ENCODE measurements at regions of chr3 and their contacts with region 1.

Region 1: DNA sequence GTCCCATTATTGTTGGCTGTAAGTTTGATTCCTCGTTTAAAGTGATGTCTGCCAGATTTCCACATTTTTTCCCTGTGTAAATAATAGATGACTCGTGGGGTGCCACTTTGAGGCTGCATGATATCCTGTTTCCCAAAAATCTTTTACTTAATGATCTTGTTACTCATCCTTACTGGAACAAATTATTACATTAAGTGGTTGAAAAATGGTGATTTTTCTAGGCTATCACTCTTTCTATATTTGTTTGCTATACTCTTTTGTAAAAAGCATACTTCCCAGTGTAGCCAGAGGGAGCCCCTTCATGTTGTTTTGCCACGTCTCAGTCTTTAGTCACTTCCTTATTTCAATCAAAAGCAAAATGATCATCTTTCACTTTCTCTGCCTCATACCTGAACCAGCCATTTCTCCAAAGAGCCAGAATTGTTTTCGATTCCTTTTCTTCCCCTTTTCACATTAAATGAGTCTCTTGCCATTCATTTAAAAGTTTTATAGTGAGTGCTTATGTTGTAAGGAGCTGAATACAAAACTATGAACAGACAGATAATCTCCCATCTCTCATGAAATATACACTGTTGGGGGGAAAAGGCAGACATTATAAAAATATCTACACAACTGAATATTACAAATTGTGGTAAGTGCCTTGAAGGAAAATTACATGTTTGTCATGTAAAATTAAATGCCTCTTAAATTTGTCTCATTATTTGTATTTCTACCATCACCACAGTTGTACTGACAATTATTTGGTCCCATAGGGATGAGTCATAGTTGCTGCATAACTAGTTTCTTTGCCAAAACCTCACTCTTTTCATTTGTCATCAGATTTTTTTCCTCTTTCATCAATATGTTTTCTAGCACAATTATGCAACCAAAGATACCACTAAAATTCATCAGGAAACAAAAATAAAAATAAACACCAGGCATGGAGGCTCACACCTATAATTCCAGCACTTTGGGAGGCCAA is 41.5 kb downstream of the ADGRG7 start:
- DNase-seq: peak; percentile 57
- H3K4me3 Mint-ChIP-seq: peak overlapping the region; percentile 30
- H3K27ac Mint-ChIP-seq: peak overlapping the region; percentile 84
- H3K4me1 Mint-ChIP-seq: peaks cover 16% of the 10 kb centered on the region
- H3K27me3 Mint-ChIP-seq: no peaks in the 10 kb centered on the region

Region 2: DNA sequence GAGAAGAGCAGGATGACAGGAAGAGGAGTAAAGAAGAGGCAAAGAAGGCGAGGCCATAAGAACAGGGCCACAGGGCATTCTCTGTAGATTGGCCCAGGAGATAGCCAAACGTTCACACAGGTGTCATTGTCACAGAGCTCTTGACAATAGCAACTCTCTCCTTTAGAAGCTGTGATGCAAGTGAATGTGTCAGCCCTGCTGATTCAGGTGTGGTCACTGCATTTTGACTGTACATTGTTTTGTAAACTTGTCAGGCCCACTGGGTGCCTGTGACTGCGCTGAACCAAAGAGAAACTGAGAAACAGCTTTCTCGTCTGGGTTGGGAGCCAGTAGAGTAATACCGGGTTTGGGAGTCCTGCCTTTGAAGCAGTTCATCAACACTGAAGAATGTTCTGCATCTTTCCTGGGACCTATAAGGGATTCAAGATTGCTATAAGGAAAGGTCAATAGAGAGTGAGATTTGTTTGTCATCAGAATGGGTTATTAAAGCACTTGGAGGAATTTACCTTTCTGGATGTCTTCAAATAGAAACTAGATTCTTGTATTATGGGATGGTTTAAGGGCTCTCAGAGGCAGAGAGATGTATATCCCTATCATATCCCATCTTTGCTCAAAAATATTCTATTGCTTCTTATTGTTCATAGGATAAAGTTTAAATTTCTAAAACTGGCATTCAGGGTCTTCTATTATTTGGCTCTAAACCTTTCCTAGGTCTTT is 113.2 kb before region 1 on chr3:
- CTCF ChIA-PET with region 1: no interaction called
- intact Hi-C with region 1: no loop called
- DNase-seq: no peak
- H3K4me3 Mint-ChIP-seq: no peak overlapping the region
- H3K27ac Mint-ChIP-seq: no peak overlapping the region
- H3K4me1 Mint-ChIP-seq: no peaks in the 10 kb centered on the region
- H3K27me3 Mint-ChIP-seq: no peaks in the 10 kb centered on the region

Region 3: DNA sequence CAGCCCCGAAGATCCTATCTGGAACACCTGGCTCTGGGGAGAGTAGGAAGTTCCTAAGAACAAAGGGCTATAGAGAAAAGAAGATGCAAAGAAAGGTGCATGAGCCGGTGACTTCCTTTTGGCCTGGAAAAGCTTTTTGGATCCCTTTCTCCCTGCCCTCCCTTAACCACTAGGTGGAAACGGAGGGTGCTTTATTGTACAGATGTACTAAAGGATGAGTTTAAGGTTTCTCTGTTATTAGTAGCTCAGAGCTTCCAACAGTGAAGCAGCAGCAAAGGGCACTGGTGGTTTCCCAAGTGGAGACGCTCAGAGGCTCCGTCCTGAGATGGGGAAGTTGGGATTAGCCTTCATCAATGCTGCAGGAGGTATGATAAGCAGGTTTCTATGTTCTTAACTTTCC is 47.5 kb before region 1 on chr3:
- CTCF ChIA-PET with region 1: interaction called, 3 read pairs
- intact Hi-C with region 1: loop called (anchors 2 kb)
- DNase-seq: no peak
- H3K4me3 Mint-ChIP-seq: peak overlapping the region; percentile 37
- H3K27ac Mint-ChIP-seq: no peak overlapping the region
- H3K4me1 Mint-ChIP-seq: peaks cover 25% of the 10 kb centered on the region
- H3K27me3 Mint-ChIP-seq: peaks cover 2% of the 10 kb centered on the region

Region 4: DNA sequence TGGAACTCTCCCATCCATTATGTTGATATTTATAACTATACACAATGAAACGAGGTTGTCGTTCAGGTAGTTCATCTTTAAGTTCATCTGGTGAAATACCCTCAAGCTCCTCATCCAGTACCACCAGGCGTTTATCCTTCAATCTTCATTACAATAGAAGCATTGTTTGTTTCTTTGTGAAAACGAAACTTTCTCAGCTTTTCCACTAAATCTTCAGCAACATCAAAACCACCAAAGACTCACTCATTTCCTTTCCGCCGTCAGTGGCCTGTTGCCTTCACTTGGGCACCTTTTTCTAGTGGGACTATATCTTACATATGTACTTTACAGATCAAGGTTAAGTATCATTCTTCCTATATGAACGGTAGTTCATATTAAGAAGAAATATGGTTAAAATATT is 14.3 kb after region 1 on chr3:
- CTCF ChIA-PET with region 1: interaction called, 4 read pairs
- intact Hi-C with region 1: loop called (anchors 1 kb)
- DNase-seq: peak; percentile 63
- H3K4me3 Mint-ChIP-seq: peak overlapping the region; percentile 34
- H3K27ac Mint-ChIP-seq: peak overlapping the region; percentile 47
- H3K4me1 Mint-ChIP-seq: peaks cover 22% of the 10 kb centered on the region
- H3K27me3 Mint-ChIP-seq: no peaks in the 10 kb centered on the region

Region 5: DNA sequence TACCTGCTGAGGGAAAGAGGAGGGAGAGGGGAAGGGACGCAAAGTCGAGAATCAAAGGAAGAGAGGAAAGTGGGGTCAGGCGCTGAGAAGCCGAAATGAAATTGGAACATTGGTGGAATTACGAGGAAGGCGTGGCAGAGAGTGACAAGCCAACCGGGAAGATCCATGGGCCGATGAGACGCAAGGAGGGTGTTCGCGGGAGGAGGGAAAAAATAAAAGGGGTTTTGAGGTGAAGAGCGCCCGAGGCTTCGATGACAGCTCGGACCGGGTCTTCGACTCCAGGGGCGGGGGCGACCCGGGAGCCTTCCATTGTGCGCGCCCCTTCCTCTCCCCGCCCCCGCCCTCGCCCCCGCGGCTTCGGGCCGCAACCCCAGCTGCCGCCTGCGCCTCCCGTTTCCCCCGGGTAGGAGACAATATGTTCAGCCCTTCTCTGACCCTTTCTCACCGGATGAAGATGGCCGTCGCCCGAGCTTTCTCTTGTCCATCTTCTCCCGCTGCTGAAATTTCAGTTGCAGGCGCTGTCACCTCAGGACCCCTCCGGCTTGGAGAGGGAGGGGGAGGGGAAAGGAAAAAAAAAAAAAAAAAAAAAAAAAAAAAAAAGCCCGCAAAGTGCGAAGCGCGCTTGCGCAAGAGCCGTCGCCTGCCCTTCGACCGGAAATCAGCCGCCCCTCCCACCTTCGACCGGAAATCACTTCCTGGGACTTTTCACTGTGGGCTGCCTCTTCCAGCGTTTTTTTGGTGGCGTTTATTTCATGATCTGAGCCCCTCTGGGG is 861.9 kb after region 1 on chr3 and contains the start of gene SENP7:
- CTCF ChIA-PET with region 1: no interaction called
- intact Hi-C with region 1: loop called (anchors 2 kb)
- DNase-seq: peak; percentile 89
- H3K4me3 Mint-ChIP-seq: peak within 1 kb of the TSS; percentile 97
- H3K27ac Mint-ChIP-seq: peak within 1 kb of the TSS; percentile 97
- H3K4me1 Mint-ChIP-seq: peaks cover 50% of the 10 kb centered on the region
- H3K27me3 Mint-ChIP-seq: no peaks in the 10 kb centered on the region
- total RNA-seq, gene SENP7: 16.1 to 16.8 TPM